Caco-2 (cell line): ENCODE measurements at regions of chr10 and their contacts with region 1.

Region 1: GRCh38 chr10:77846718-77847630 is 79.6 kb downstream of the DLG5 start:
- DNase-seq: peak; percentile 72 to 87
- H3K4me3 ChIP-seq: no peak overlapping the region
- H3K4me3 Mint-ChIP-seq: no peak overlapping the region
- H3K27ac Mint-ChIP-seq: peak overlapping the region; percentile 48
- H3K4me1 ChIP-seq: peaks cover 31% of the 10 kb centered on the region
- H3K4me1 Mint-ChIP-seq: peaks cover 48% of the 10 kb centered on the region
- H3K27me3 ChIP-seq: no peaks in the 10 kb centered on the region
- H3K27me3 Mint-ChIP-seq: no peaks in the 10 kb centered on the region
- CTCF ChIP-seq: peak; percentile 91 to 94

Region 2: DNA sequence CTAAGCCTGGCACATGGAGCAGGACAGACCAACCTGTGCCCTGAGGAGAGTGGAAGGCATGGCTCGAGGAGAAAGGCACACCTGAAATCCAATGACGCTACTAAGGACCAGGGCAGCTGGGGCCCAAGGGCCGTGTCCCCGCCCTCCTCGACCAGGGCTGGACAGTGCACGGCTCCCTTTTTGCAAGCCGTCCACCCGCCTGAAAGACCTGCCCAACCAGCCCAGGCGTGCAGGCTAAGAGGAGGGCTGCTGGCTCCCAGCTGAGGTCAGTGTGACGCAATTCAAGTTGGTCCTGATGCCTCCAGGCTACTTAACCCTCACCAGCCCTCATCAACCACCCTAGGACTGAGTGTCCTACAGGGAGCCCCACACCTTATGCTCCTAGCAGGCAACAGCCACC is 10.3 kb after region 1 on chr10:
- CTCF ChIA-PET with region 1: interaction called, 4 read pairs
- POLR2A ChIA-PET with region 1: no interaction called
- intact Hi-C with region 1: loop called (anchors 1 kb)
- DNase-seq: peak; percentile 86
- H3K4me3 ChIP-seq: no peak overlapping the region
- H3K4me3 Mint-ChIP-seq: no peak overlapping the region
- H3K27ac Mint-ChIP-seq: peak overlapping the region; percentile 74
- H3K4me1 ChIP-seq: peaks cover 13% of the 10 kb centered on the region
- H3K4me1 Mint-ChIP-seq: peaks cover 15% of the 10 kb centered on the region
- H3K27me3 ChIP-seq: no peaks in the 10 kb centered on the region
- H3K27me3 Mint-ChIP-seq: no peaks in the 10 kb centered on the region
- CTCF ChIP-seq: no peak

Region 3: DNA sequence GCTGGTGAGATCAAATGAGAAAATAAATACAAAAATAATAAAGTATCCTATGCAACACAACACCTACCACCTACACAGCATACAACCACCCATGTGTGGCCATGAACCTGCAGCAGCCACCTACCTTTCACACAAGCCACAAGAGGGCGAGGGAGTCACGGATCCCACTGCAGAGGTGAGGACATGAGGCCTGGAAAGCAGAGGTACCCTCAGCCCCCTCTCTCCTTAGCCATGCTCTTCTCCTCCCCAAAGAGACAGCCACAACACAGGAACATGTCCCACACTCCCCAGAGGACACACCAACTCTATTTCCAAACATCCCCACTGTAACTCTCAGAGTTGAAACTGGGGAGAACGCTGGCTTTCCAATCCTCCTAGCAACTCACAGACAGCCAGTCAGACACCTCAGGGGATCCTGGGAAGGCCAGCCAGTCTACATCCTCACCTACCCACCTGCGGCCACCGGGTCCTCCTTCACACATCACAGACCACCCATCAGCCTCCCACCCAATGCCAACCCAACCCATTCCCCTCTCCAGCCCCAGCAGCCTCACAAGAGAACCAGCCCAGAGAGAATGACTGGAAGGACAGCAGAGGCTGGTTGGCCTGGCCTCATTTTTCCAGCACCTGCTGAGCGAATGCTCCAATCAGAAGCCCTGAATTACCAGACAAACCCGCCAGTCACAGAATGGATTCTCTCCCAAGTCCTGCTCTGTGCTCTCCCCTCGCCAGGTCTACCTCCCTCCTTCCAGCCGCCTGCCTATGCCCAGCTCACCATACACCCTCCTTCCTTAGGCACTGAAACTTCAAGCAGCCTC is 61.1 kb after region 1 on chr10:
- CTCF ChIA-PET with region 1: no interaction called
- POLR2A ChIA-PET with region 1: interaction called, 4 read pairs
- intact Hi-C with region 1: loop called (anchors 5 kb)
- DNase-seq: peak; percentile 56
- H3K4me3 ChIP-seq: no peak overlapping the region
- H3K4me3 Mint-ChIP-seq: peak overlapping the region; percentile 23
- H3K27ac Mint-ChIP-seq: peak overlapping the region; percentile 99
- H3K4me1 ChIP-seq: peaks cover 58% of the 10 kb centered on the region
- H3K4me1 Mint-ChIP-seq: peaks cover 48% of the 10 kb centered on the region
- H3K27me3 ChIP-seq: no peaks in the 10 kb centered on the region
- H3K27me3 Mint-ChIP-seq: no peaks in the 10 kb centered on the region
- CTCF ChIP-seq: peak; percentile 41 to 58

Region 4: DNA sequence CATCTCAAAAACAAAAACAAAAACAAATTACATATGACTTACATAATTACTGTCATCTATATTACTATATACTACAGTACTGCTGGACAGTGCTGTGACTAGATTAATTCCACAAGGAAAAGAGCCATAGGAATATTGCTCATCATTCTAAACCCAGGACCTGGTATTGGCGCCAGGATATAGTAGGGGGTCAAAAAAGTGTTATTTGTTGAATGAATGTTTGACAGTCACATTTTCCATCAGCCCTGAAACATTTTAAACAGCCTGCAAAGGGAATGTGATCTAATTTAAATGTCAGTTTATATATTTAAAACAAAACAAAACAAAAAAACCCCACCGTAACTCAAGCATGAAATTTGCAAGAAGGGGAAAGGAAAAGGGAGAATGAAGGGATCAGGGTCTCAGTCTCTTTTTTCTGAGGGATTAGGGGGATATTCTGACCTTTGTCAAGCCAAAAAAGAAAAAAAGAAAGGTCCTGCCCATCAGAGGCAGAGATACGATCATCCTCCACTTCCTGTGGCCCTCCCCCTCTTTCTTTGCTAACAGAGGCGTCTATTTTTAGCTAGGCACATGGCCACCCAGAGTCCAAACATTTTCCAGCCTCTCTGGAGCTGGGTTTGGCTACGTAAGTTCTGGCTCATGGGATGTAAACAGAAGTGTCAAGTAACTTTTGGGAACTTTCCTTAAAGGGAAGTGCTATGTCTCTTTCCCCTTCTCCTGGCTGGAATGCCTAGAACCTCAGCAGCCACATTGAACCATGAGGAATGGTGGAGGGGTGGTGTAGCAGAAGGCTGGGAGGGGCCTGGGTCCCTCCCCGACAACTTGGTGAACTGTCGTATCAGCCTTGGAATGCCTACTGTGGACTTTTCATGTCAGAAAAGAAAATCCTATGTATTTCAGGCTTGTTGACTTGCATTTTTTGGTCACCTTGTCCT is 124.2 kb after region 1 on chr10:
- CTCF ChIA-PET with region 1: interaction called, 7 read pairs
- POLR2A ChIA-PET with region 1: no interaction called
- intact Hi-C with region 1: loop called (anchors 2 kb)
- DNase-seq: peak in 1 of 2 experiments; percentile 3
- H3K4me3 ChIP-seq: no peak overlapping the region
- H3K4me3 Mint-ChIP-seq: no peak overlapping the region
- H3K27ac Mint-ChIP-seq: no peak overlapping the region
- H3K4me1 ChIP-seq: peaks cover 6% of the 10 kb centered on the region; the same call in 1 of the 2 replicates
- H3K4me1 Mint-ChIP-seq: no peaks in the 10 kb centered on the region
- H3K27me3 ChIP-seq: no peaks in the 10 kb centered on the region
- H3K27me3 Mint-ChIP-seq: no peaks in the 10 kb centered on the region
- CTCF ChIP-seq: no peak

Region 5: GRCh38 chr10:78029269-78030226 is 182.6 kb after region 1 on chr10 and contains the start of gene POLR3A:
- CTCF ChIA-PET with region 1: interaction called, 3 read pairs
- POLR2A ChIA-PET with region 1: no interaction called
- intact Hi-C with region 1: loop called (anchors 2 kb)
- DNase-seq: peak; percentile 95 to 98
- H3K4me3 ChIP-seq: peak within 1 kb of the TSS; percentile 75
- H3K4me3 Mint-ChIP-seq: peak within 1 kb of the TSS; percentile 93
- H3K27ac Mint-ChIP-seq: peak within 1 kb of the TSS; percentile 89
- H3K4me1 ChIP-seq: no peaks in the 10 kb centered on the region; the same call in 1 of the 2 replicates
- H3K4me1 Mint-ChIP-seq: peaks cover 5% of the 10 kb centered on the region
- H3K27me3 ChIP-seq: no peaks in the 10 kb centered on the region
- H3K27me3 Mint-ChIP-seq: no peaks in the 10 kb centered on the region
- CTCF ChIP-seq: peak; percentile 78 to 79
- total RNA-seq, gene POLR3A: 25.5 and 29.1 TPM in 2 replicates